ENCODE measurements at regions of chr12 and their contacts with region 1.

Region 1: GRCh38 chr12:101759396-101760047 is 20.3 kb upstream of the SYCP3 start:
- DNase-seq: no peak
- H3K4me3 Mint-ChIP-seq: no peak overlapping the region
- H3K27ac Mint-ChIP-seq: no peak overlapping the region
- H3K4me1 Mint-ChIP-seq: no peaks in the 10 kb centered on the region
- H3K27me3 Mint-ChIP-seq: no peaks in the 10 kb centered on the region

Region 2: DNA sequence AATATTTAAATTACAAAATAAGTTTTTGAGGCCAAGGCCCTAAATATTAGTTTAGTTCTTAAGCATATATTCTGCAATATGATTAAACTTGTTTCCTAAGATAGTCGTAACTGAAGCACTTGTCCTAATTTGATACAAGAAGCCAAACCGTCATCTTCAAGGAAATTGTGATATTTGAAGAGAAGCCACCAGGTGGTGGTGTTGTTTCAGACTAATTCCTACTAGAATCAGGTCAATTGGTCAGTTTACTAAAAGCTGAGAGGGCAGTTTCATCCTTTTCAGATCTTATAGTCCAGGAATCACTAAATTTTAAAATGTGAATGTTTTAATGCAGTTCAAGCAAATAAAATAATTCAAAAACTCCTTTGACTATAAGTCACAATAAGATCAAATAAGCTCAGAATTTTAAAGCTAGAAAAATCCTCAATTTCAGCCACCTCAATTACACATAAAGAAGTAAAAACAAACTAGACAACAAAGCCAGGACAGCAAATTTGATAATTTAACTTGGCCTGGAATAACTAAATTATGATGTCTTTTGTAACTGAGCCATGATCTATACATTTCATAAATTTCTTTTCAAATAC is 344.9 kb before region 1 on chr12:
- CTCF ChIA-PET with region 1: interaction called, 14 read pairs
- POLR2A ChIA-PET with region 1: no interaction called
- DNase-seq: no peak
- H3K4me3 Mint-ChIP-seq: no peak overlapping the region
- H3K27ac Mint-ChIP-seq: no peak overlapping the region
- H3K4me1 Mint-ChIP-seq: no peaks in the 10 kb centered on the region
- H3K27me3 Mint-ChIP-seq: peaks cover 17% of the 10 kb centered on the region

Region 3: GRCh38 chr12:101747697-101748096 is 11.8 kb before region 1 on chr12:
- CTCF ChIA-PET with region 1: interaction called, 14 read pairs
- POLR2A ChIA-PET with region 1: no interaction called
- DNase-seq: no peak
- H3K4me3 Mint-ChIP-seq: no peak overlapping the region
- H3K27ac Mint-ChIP-seq: no peak overlapping the region
- H3K4me1 Mint-ChIP-seq: peaks cover 17% of the 10 kb centered on the region
- H3K27me3 Mint-ChIP-seq: no peaks in the 10 kb centered on the region

Region 4: GRCh38 chr12:101830367-101831325 is 71.1 kb after region 1 on chr12 and contains the start of gene GNPTAB:
- CTCF ChIA-PET with region 1: interaction called, 12 read pairs
- POLR2A ChIA-PET with region 1: no interaction called
- DNase-seq: peak; percentile 96
- H3K4me3 Mint-ChIP-seq: peak within 1 kb of the TSS; percentile 96
- H3K27ac Mint-ChIP-seq: peak within 1 kb of the TSS; percentile 83
- H3K4me1 Mint-ChIP-seq: peaks cover 44% of the 10 kb centered on the region
- H3K27me3 Mint-ChIP-seq: no peaks in the 10 kb centered on the region
- total RNA-seq, gene GNPTAB: 55.0 to 57.5 TPM